B cell (primary cell): ENCODE measurements at regions of chr12 and their contacts with region 1.

Region 1: DNA sequence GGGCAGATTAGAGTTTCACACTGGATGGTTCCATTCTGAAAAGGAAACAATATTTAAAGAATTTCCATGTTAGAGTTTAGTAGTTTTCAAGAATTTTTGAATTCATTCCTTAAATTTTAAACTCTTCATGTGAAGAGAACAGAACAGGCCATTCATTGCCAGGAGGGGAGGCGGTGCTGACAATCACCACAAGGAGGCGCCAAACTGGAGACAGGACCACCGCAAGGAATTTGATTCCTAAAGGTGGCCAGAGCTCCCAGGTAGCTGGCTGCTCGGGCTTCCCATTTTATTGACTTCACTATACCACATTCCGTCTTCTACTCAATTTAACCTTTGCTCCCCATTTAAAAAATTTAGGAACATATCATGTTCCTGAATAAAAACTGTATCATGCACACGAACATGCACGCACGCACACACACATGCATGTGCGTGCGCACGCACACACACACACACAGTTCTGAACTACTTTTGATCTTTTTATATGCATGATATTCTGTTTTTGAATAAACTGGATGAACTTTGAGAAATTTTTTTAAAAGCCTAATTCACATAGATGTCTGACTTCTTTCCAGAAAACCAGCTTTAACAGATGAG is 101.2 kb downstream of the NELL2 start:
- DNase-seq: peak; percentile 30
- ATAC-seq: no peak
- H3K4me3 ChIP-seq: no peak overlapping the region
- H3K4me3 Mint-ChIP-seq: no peak overlapping the region
- H3K27ac ChIP-seq: no peak overlapping the region
- H3K27ac Mint-ChIP-seq: no peak overlapping the region
- H3K4me1 ChIP-seq: no peaks in the 10 kb centered on the region
- H3K4me1 Mint-ChIP-seq: no peaks in the 10 kb centered on the region
- H3K27me3 ChIP-seq: no peaks in the 10 kb centered on the region
- H3K27me3 Mint-ChIP-seq: peaks cover 3% of the 10 kb centered on the region
- CTCF ChIP-seq: peak; percentile 82

Region 2: DNA sequence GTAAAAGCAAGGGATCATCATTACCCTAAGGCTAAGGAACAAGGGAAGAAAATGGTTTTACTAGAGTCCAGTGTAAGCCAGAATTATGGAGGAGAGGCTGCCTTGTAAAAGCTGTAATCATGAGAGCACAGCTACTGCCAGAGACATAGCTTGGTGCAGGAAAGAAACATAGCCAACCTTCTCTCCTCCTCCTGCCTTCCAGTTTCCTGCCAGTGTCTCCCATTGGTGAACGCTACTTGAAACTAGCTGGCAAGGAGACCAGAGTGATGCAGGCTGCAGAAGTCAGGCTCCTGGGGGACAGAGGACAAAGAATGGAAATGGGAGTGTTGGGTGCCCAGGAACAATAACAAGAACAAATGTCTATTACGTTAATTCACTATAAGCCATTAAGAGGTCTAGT is 57.3 kb before region 1 on chr12:
- CTCF ChIA-PET with region 1: no interaction called
- POLR2A ChIA-PET with region 1: no interaction called
- intact Hi-C with region 1: no loop called
- DNase-seq: no peak
- ATAC-seq: no peak
- H3K4me3 ChIP-seq: no peak overlapping the region
- H3K4me3 Mint-ChIP-seq: no peak overlapping the region
- H3K27ac ChIP-seq: no peak overlapping the region
- H3K27ac Mint-ChIP-seq: no peak overlapping the region
- H3K4me1 ChIP-seq: no peaks in the 10 kb centered on the region
- H3K4me1 Mint-ChIP-seq: no peaks in the 10 kb centered on the region
- H3K27me3 ChIP-seq: no peaks in the 10 kb centered on the region
- H3K27me3 Mint-ChIP-seq: no peaks in the 10 kb centered on the region
- CTCF ChIP-seq: no peak

Region 3: DNA sequence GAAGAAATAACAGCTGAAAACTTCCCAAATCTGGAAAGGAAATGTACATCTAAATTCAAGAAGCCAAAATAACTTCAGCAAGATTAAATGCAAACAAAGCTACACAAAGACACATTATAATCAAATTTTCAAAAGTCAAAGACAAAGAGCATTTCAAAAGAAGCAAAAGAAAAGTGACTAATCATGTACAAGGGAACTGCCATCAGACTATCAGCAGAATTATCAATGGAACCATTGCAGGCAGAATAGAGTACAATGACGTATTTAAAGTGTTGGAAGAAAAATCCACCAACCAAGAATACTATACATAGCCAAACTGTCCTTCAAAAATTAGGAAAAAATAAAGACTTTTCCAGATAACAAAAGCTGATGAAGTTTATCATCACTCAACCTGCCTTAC is 46.3 kb before region 1 on chr12:
- CTCF ChIA-PET with region 1: no interaction called
- POLR2A ChIA-PET with region 1: no interaction called
- intact Hi-C with region 1: no loop called
- DNase-seq: no peak
- ATAC-seq: no peak
- H3K4me3 ChIP-seq: no peak overlapping the region
- H3K4me3 Mint-ChIP-seq: no peak overlapping the region
- H3K27ac ChIP-seq: no peak overlapping the region
- H3K27ac Mint-ChIP-seq: no peak overlapping the region
- H3K4me1 ChIP-seq: no peaks in the 10 kb centered on the region
- H3K4me1 Mint-ChIP-seq: no peaks in the 10 kb centered on the region
- H3K27me3 ChIP-seq: no peaks in the 10 kb centered on the region
- H3K27me3 Mint-ChIP-seq: no peaks in the 10 kb centered on the region
- CTCF ChIP-seq: no peak

Region 4: GRCh38 chr12:44875954-44876553 is 101.1 kb after region 1 on chr12 and contains the start of gene NELL2:
- CTCF ChIA-PET with region 1: interaction called, 11 read pairs
- POLR2A ChIA-PET with region 1: no interaction called
- intact Hi-C with region 1: loop called (anchors 2 kb)
- DNase-seq: peak; percentile 14
- ATAC-seq: peak; percentile 66
- H3K4me3 ChIP-seq: peak within 1 kb of the TSS in 4 of 5 experiments; percentile 28 to 63 (median 40)
- H3K4me3 Mint-ChIP-seq: peak within 1 kb of the TSS; percentile 87
- H3K27ac ChIP-seq: no peak within 1 kb of the TSS
- H3K27ac Mint-ChIP-seq: no peak within 1 kb of the TSS
- H3K4me1 ChIP-seq: peaks cover 18 to 19% of the 10 kb centered on the region in 2 donors
- H3K4me1 Mint-ChIP-seq: peaks cover 17% of the 10 kb centered on the region
- H3K27me3 ChIP-seq: peaks cover 0 to 35% (median 32%) of the 10 kb centered on the region in 4 experiments
- H3K27me3 Mint-ChIP-seq: peaks cover 53% of the 10 kb centered on the region
- CTCF ChIP-seq: no peak
- total RNA-seq, gene NELL2: 0.39 TPM in 1 of 2 replicates, not detected in the other